Activated naive CD4-positive, alpha-beta T cell treated with anti-CD3 and anti-CD28 coated beads for 36 hours (primary cell): ENCODE measurements at regions of chr1 and their contacts with region 1.

Region 1: DNA sequence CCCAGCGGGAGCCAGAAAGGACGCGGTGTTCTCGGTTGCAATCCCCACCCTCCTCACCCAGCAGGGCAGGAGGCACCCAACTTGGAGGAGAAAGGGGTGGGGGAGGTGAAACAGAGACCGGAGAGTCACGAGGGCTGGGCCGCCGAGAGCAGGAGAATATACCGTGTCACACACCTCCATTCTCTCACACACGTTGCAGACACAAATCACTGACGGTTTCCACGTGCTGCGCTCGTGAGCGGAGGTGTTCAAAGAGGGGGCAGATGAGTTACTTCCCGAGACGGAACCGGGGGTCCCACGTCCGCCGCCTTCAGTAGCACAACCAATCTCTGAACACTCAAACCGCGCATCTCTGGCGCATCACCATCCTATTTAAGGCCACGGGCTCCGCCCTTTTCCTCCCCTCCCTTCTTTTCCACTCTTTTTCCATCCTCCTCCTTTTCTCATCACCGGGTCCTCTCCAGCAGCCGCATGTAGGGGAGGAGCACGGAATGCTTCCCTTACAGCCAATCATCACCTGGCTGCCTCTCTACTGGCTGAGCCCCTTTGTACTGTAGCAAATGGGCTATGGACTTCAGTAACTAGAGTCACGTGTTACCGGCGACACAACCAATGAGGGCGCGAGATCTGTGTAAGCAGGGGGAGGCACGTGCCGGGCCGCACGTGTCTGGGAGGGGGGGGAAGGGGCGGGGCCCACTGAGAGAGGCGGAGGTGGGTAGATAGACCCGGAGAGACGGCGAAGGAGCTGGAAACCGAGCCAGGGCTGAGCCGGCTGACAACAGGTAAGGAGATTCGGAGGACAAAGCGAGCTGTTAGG is at the start of gene CIART:
- DNase-seq: peak; percentile 78
- H3K4me3 Mint-ChIP-seq: peak within 1 kb of the TSS; percentile 82
- H3K27ac Mint-ChIP-seq: no peak within 1 kb of the TSS
- H3K4me1 Mint-ChIP-seq: peaks cover 24% of the 10 kb centered on the region
- H3K27me3 Mint-ChIP-seq: no peaks in the 10 kb centered on the region
- total RNA-seq, gene CIART: 0.84 to 1.0 TPM

Region 2: DNA sequence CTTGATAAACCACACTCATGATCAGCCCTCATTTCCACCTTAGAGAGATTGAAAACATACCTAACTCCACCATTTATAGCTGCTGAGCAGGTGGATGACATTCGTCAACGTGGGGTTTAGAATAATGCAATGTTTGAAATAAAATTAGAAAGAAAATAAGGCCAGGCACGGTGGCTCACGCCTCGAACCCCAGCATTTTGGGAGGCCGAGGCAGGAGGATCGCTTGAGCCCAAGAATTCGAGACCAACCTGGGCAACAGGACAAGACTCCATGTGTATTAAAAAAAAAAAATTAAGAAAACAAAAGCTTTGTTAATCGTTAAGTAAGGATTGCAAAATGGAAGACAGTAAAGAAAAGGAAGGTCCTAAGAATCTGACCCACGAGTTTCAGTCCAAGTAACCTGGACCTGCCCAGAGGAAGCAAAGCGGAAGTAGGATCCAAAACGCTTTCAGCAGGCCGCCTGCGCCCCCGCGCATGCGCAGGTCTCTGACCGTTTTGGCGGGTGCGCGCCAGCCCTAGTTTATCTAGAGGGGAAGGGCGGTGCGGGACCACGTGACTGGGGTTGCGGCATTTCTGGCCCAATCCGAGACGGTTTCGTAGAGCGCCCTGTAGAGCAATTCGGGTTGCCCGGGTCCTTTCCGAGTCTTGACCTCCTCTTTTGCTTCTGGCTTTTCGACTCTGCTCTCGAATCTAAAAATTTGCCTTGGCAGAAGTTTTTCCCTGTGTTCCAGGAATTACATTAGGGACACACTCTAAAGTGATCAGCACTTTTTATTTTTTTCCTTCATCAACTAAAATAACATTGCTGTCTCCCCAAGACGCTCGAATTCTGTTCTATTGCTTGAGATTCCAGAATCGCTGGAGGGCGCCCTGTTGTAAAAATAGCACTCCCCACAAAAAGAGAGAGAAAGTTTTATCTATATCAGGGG is 68.6 kb before region 1 on chr1:
- CTCF ChIA-PET with region 1: no interaction called
- intact Hi-C with region 1: loop called (anchors 1 kb)
- DNase-seq: peak; percentile 96
- H3K4me3 Mint-ChIP-seq: peak overlapping the region; percentile 81
- H3K27ac Mint-ChIP-seq: peak overlapping the region; percentile 92
- H3K4me1 Mint-ChIP-seq: peaks cover 15% of the 10 kb centered on the region
- H3K27me3 Mint-ChIP-seq: no peaks in the 10 kb centered on the region